Calu3 (cell line): ENCODE measurements at regions of chr7 and their contacts with region 1.

Region 1: GRCh38 chr7:98014352-98014751 is 24.4 kb upstream of the OCM2 start:
- DNase-seq: no peak
- H3K4me3 Mint-ChIP-seq: no peak overlapping the region
- H3K27ac Mint-ChIP-seq: no peak overlapping the region
- H3K4me1 Mint-ChIP-seq: no peaks in the 10 kb centered on the region
- H3K27me3 Mint-ChIP-seq: no peaks in the 10 kb centered on the region
- CTCF ChIP-seq: no peak

Region 2: DNA sequence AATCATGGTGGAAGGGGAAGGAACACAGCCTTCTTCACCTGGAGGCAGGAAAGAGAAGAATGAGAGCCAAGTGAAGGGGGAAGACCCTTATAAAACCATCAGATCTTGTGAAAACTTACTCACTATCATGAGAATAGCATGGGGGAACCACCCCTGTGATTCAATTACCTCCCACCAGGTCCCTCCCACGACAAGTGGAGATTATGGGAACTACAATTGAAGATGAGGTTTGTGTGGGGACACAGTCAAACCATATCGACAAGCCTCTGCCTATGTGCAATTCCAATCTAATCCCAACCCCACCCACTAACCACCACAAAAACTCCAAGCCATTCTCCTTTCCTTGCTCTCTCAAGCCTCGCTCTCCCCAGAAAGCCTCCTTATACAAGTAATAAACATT is 213.2 kb before region 1 on chr7:
- CTCF ChIA-PET with region 1: no interaction called
- intact Hi-C with region 1: no loop called
- DNase-seq: no peak
- H3K4me3 Mint-ChIP-seq: no peak overlapping the region
- H3K27ac Mint-ChIP-seq: no peak overlapping the region
- H3K4me1 Mint-ChIP-seq: peaks cover 9% of the 10 kb centered on the region
- H3K27me3 Mint-ChIP-seq: peaks cover 9% of the 10 kb centered on the region
- CTCF ChIP-seq: no peak

Region 3: GRCh38 chr7:97845622-97846203 is 168.6 kb before region 1 on chr7:
- CTCF ChIA-PET with region 1: no interaction called
- intact Hi-C with region 1: loop called (anchors 5 kb)
- DNase-seq: peak; percentile 17
- H3K4me3 Mint-ChIP-seq: no peak overlapping the region
- H3K27ac Mint-ChIP-seq: no peak overlapping the region
- H3K4me1 Mint-ChIP-seq: no peaks in the 10 kb centered on the region
- H3K27me3 Mint-ChIP-seq: peaks cover 10% of the 10 kb centered on the region
- CTCF ChIP-seq: peak; percentile 14

Region 4: DNA sequence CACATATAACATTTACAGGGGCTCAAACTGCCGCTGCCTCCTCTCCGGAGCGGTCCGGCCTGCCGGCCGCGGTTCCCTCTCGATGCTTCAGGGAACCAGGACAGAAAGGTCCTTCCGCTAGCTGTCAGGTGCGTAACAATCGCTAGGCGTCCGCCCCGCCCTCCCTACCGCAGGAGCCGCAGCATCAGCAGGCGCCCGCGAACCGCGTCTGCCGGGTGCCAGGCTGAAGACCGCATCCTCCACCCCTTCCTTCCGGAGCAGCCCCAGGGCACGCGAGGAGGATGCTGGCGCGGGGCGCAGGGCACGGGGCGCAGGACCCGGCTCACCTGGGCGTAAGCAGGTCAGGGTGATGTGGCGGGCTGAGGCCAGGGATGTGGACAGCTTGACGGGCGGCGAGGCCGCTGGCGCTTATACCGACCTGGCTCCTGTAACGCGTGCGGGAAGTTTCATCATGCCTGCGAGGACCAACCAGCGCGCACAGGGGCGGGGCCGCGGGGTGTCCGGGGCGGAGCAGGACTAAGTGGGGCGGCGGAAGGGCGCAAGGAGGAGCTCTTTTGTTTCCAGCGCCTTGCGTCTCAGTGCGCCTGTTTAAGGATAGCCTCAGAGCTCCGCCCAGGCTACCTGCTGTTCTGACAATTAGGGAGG is 142.2 kb before region 1 on chr7 and contains the start of gene ASNS:
- CTCF ChIA-PET with region 1: interaction called, 4 read pairs
- intact Hi-C with region 1: loop called (anchors 10 kb)
- DNase-seq: peak; percentile 91
- H3K4me3 Mint-ChIP-seq: peak within 1 kb of the TSS; percentile 79
- H3K27ac Mint-ChIP-seq: peak within 1 kb of the TSS; percentile 71
- H3K4me1 Mint-ChIP-seq: no peaks in the 10 kb centered on the region
- H3K27me3 Mint-ChIP-seq: no peaks in the 10 kb centered on the region
- CTCF ChIP-seq: no peak
- total RNA-seq, gene ASNS: 52.9 and 64.0 TPM in 2 replicates

Region 5: GRCh38 chr7:98470485-98471240 is 456.3 kb after region 1 on chr7:
- CTCF ChIA-PET with region 1: no interaction called
- intact Hi-C with region 1: no loop called
- DNase-seq: peak; percentile 27
- H3K4me3 Mint-ChIP-seq: no peak overlapping the region
- H3K27ac Mint-ChIP-seq: no peak overlapping the region
- H3K4me1 Mint-ChIP-seq: peaks cover 2% of the 10 kb centered on the region
- H3K27me3 Mint-ChIP-seq: peaks cover 17% of the 10 kb centered on the region
- CTCF ChIP-seq: no peak